Right ventricle myocardium inferior (tissue), 1 donor: ENCODE measurements at regions of chr11 and their contacts with region 1.

Region 1: DNA sequence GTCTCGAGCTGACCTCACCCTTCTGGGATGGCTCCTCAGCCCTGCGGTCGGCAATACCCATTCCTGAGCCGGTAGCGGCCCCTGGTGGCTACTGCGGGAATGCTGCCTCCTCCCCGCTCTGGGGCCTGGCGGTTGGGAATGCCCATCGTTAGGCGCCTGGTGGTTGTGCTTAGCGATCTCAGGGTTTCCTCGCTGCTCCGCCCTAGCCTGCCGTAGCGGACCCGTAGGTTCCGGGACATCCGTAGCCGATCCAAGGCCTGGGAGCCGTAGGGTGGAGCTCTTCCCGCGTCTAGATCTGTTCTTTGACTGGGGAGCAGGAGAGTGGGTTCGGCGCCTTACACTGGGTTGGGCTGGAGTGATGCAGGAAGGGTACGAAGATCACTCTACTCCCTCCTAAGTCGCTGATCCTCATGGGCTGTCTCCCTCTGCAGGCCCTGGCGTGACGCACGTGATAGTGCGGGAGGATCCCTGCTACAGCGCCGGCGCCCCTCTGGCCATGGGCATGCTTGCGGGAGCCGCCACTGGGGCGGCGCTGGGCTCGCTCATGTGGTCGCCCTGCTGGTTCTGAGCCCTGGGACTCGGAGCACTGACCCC is 14.8 kb downstream of the PLEKHB1 start:
- DNase-seq: peak; percentile 94
- ATAC-seq: peak; percentile 96

Region 2: GRCh38 chr11:73625696-73626318 is 35.3 kb before region 1 on chr11:
- intact Hi-C with region 1: loop called (anchors 1 kb)
- DNase-seq: peak; percentile 76
- ATAC-seq: peak; percentile 80

Region 3: GRCh38 chr11:73705053-73705452 is 43.9 kb after region 1 on chr11:
- intact Hi-C with region 1: no loop called
- DNase-seq: no peak
- ATAC-seq: no peak

Region 4: GRCh38 chr11:73729594-73730206 is 68.6 kb after region 1 on chr11:
- intact Hi-C with region 1: no loop called
- DNase-seq: no peak
- ATAC-seq: no peak